HEK293 (cell line): ENCODE measurements at regions of chr17 and their contacts with region 1.

Region 1: GRCh38 chr17:58200017-58200633 is 7.6 kb downstream of the EPX start:
- H3K4me3 ChIP-seq: no peak overlapping the region
- H3K27ac ChIP-seq: no peak overlapping the region
- H3K4me1 ChIP-seq: no peaks in the 10 kb centered on the region; the same call in 1 of the 2 replicates
- CTCF ChIP-seq: peak; percentile 63

Region 2: DNA sequence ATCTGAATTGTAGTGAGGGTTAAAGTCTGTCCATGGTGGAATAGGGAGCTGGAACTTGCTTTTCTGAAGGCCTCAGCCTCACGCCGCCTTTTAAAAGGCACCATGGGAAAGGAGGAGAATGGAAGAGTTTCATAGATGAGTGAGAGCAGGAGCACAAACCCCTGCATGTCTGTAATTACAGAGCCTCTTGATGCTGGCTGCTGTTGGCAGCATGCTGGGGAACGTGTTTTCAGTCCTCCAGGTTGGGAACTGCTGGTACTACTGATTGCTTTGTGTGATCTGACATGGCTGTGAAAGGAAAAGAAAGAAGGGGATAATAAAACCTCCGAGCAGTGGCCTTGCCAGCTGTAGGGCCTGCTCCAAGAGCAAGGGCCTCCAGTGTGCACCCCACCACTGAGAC is 133.7 kb before region 1 on chr17:
- CTCF ChIA-PET with region 1: no interaction called
- POLR2A ChIA-PET with region 1: no interaction called
- H3K4me3 ChIP-seq: no peak overlapping the region
- H3K27ac ChIP-seq: no peak overlapping the region
- H3K4me1 ChIP-seq: no peaks in the 10 kb centered on the region
- CTCF ChIP-seq: no peak

Region 3: DNA sequence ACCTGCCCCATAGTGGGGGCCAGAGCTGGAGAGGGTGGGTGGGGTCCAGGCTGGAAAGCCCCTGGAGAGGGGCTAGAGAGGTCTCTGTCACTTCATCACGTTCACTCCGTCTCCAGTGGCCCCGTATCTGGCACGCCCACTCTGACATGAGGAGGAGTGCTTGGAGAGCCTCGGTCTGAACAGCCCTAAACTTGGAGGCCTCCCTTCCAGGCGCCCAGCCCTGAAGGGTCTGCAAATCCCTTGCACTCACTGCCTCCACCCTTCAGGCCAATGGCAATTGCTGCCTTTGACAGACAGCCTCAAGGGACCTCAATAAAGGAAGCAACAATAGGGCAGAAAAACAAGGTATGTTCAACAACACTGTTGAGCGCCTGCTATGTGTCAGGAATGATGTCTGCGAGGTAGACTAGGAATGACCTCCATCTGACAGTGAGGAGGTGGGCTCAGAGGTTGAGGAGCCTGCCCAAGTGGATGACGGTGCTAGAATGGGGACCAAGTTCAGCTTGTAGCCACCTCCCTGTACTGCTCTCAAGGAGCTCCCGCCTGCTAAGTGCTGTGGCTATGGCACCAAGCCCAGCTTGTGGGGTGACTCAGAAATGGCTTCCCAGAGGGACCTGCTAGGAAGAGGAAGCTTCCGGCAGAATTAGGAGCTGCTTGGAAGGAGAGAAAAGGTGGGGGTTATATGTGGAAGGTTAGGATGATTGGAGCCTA is 10.5 kb before region 1 on chr17:
- CTCF ChIA-PET with region 1: interaction called, 24 read pairs
- POLR2A ChIA-PET with region 1: interaction called, 3 read pairs
- H3K4me3 ChIP-seq: no peak overlapping the region
- H3K27ac ChIP-seq: no peak overlapping the region
- H3K4me1 ChIP-seq: no peaks in the 10 kb centered on the region
- CTCF ChIP-seq: no peak

Region 4: GRCh38 chr17:58210922-58211321 is 10.8 kb after region 1 on chr17:
- CTCF ChIA-PET with region 1: interaction called, 84 read pairs
- POLR2A ChIA-PET with region 1: no interaction called
- H3K4me3 ChIP-seq: no peak overlapping the region
- H3K27ac ChIP-seq: no peak overlapping the region
- H3K4me1 ChIP-seq: no peaks in the 10 kb centered on the region
- CTCF ChIP-seq: no peak

Region 5: GRCh38 chr17:58219001-58219788 is 19.1 kb after region 1 on chr17 and contains the start of gene MKS1:
- CTCF ChIA-PET with region 1: interaction called, 84 read pairs
- POLR2A ChIA-PET with region 1: interaction called, 14 read pairs
- H3K4me3 ChIP-seq: peak within 1 kb of the TSS; percentile 79
- H3K27ac ChIP-seq: peak within 1 kb of the TSS; percentile 14; the same call in 1 of the 2 replicates
- H3K4me1 ChIP-seq: no peaks in the 10 kb centered on the region
- CTCF ChIP-seq: peak; percentile 94

Region 6: DNA sequence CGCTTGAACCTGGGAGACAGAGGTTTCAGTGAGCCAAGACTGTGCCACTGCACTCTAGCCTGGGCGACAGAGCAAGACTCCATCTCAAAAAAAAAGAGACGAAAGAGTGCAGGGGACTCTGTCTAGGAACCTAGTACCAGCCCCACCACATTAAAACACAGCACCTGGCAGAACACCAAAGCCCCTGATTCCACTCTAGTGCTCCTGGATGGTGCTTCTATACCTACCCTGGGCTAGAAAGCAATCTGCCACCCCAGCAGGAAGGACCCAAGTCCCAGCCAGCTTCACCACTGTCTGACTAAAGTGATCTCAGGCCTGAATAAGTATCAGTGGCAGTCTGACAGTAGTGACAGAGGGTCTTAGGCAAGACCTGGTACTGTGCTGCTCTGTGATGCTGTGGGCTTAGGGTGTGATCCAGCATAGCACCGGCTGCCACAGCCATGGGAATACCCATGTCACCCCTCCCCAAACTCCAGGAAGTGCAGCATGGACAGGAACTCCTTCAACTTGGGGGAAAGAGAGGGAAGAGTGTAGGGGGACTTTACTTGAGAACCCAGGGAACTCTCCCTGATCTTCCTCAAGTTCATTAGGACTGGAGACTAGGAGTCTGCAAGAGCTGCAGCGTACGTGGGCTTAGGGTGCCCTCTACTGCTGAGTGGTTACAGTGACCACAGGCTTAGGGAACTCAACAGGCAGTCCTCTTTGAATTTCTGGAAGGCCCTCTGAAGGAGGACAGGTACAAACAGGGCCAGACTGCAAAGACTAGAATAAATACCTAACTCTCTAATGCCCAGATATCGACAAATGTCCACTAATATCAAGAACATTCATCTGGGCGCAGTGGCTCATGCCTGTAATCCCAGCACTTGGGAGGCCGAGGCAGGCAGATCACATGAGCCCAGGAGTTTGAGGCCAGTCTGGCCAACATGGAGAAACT is 247.2 kb after region 1 on chr17:
- CTCF ChIA-PET with region 1: interaction called, 41 read pairs
- POLR2A ChIA-PET with region 1: no interaction called
- H3K4me3 ChIP-seq: no peak overlapping the region
- H3K27ac ChIP-seq: no peak overlapping the region
- H3K4me1 ChIP-seq: no peaks in the 10 kb centered on the region
- CTCF ChIP-seq: peak; percentile 93